ENCODE measurements at regions of chr22 and their contacts with region 1.

Region 1: DNA sequence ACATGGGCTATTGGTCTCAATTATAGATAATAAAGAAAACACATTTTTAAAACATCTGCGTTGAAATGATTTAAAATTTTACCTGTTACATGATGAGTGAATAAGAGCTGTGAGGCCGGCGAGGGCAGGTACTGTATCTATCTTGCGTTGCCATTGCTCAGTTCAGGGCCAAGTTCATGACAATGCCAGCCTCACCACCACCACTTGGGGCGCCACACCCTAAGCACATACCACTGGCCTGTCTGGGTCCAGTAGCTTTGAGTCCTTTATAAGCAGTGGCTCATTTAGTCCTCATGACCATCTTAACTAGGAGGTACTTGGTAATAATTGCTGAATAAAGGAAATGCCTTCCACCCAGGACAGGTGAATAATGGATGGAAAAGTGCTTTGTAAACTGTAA is 14.5 kb upstream of the MB start:
- DNase-seq: peak in 8 of 42 donors; percentile 15 to 50 (median 21)

Region 2: DNA sequence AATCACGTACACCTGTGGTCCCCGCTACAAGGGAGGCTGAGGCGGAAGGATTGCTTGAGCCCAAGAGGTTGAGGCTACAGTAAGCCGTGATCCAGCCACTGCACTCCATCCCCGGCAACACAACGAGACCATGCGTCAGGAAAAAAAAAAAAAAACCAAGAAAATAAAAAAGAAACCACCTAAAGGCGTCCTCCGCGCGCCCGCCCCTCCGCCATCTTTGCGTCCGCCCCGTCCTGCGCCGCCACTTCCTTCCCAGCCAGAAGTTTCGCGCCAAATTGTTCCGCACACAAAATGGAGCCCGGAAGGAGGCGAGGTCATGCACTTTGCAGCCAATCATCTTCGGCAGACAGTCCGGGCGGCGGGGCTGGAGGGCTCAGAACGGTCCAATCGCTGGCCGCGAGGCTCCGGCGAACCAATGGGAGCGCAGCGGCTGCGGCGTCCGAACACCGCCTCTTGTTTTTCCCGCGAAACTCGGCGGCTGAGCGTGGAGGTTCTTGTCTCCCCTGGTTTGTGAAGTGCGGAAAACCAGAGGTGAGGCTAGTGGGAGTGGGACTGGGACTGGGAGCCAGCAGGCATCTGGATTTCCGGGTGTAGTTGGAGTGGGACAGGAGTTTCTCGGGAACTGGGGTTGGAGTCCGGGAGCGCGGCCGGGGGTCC is 231.8 kb before region 1 on chr22 and contains the start of gene MCM5:
- intact Hi-C with region 1: no loop called
- DNase-seq: peak; percentile 95 to 99 (median 98)

Region 3: GRCh38 chr22:35582861-35583670 is 48.5 kb before region 1 on chr22:
- intact Hi-C with region 1: no loop called
- DNase-seq: peak; percentile 51 to 87 (median 72)

Region 4: GRCh38 chr22:35761037-35761436 is 129.4 kb after region 1 on chr22:
- intact Hi-C with region 1: no loop called
- DNase-seq: peak in 1 of 42 donors; percentile 26

Region 5: GRCh38 chr22:35821654-35822053 is 190.1 kb after region 1 on chr22:
- intact Hi-C with region 1: no loop called
- DNase-seq: no peak

Region 6: DNA sequence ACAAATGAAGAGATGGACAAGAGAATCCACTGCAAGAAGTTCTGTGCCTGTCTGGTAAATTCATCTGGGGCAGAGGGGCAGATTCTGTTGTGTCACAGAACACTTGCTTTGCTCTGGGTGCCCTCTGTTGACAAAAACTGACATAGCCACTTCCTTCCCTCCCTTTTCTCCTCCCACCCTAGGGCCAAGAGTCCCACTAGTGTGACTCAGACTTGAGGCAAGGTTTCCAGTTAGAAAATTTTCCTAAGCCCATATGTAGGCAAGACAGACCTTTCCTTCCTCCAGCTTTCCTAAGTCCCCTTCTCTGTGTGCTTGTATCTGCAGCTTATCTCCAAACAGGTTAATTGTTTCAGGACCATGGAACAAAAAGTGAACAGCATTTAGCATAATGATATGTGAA is 290.2 kb after region 1 on chr22:
- intact Hi-C with region 1: loop called (anchors 10 kb)
- DNase-seq: peak in 26 of 42 donors; percentile 24 to 81 (median 52)